GM18951 (cell line): ENCODE measurements at regions of chr10 and their contacts with region 1.

Region 1: GRCh38 chr10:101214446-101215396 is 14.5 kb downstream of the LBX1 start:
- POLR2A ChIP-seq: no peak

Region 2: GRCh38 chr10:101031128-101031795 is 183.5 kb before region 1 on chr10 and contains the starts of genes PDZD7 and SFXN3:
- in situ Hi-C with region 1: no loop called
- POLR2A ChIP-seq: no peak

Region 3: DNA sequence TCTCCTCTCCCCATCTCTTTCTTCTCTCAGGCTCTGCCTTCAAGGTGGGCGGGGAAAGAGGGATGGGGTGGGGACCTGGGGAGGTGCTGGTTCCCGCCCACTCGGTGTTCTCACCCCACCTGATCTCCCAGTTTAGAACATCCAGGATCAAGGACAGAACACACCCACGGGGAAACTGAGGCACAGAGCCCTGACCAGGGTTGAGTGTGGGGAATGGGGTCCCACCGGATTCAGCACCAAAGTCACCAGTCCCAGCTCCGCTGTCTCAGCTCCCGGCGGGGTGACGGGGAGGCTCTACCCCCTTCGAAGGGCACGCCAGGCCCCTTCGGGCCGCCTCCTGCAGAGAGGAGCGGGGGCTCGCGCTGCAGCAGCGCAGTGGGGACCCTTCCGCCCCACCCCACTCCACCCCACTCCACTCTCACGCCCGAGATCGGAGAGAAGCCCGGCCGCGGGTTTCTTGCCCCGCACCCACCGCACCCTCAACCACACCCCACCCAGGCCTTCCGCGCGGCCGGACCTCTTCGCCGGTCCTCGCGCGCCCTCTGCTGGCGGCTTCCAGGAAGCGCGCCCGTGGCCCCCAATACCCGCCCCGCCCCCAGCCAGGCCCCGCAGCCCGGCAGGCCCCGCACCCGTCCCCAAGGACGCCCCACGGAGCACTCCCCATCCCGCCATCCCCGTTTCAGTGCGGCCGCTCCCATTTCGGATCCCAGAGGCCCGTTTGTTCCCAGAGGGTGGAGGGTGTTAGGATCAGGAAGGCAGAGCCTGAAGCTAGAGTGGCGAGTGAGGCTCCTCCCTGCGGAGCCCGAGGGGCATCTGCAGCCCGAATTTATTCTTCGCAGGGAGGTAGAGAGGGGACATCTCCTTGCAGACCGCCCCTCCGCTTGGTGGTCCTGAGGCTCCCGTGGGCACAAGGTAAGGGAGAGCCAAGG is 355.4 kb after region 1 on chr10:
- in situ Hi-C with region 1: loop called (anchors 5 kb)
- POLR2A ChIP-seq: no peak

Region 4: GRCh38 chr10:101704331-101704730 is 489.6 kb after region 1 on chr10:
- in situ Hi-C with region 1: no loop called
- POLR2A ChIP-seq: no peak

Region 5: GRCh38 chr10:101749047-101750016 is 534.6 kb after region 1 on chr10:
- in situ Hi-C with region 1: loop called (anchors 25 kb)
- POLR2A ChIP-seq: no peak